ENCODE measurements at regions of chr4 and their contacts with region 1.

Region 1: DNA sequence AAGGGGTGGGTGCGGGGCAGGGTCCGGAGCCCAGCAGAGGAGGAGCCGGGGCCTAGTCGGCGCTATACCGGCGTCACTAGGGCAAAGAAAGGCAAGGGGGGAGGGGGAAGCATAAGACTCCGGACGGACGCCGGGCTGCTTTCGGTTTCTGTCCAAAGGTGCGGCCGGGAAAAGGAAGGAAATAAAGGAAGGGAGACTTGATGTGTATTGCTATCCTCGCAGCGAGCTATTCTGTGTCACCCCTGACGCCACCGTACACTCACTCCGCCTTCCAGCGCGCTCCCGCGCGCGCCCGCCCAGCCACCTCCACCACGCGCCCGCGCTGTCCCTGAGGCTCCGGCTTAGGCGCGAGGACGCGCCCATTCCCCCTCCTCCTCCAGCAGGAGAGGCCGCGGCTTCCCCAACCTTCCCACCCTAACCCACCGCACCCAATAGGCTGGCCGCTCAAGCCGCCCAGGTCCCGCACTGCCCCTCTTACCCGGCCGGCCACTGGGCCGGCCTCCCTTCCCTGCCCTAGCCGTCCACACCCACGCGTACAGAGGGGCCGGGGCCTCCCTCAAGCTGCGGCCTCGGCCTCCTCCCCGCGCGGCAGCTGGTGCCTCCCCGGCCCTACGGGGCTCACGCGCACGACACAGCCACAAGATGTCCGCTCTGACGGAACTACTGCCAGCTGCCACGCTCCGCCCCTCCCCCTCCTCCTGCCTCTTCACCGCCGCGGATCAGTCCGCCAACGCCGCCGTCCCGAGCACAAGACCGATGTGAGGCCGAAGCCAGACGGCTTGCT is at the start of gene UBE2D3:
- DNase-seq: peak; percentile 92
- H3K4me3 ChIP-seq: peak within 1 kb of the TSS; percentile 82 to 97 (median 89)
- H3K27ac ChIP-seq: peak within 1 kb of the TSS; percentile 98
- H3K4me1 ChIP-seq: peaks cover 32% of the 10 kb centered on the region
- H3K27me3 ChIP-seq: no peaks in the 10 kb centered on the region
- CTCF ChIP-seq: peak in 1 of 2 donors; percentile 15
- POLR2A ChIP-seq: peak; percentile 86
- total RNA-seq, gene UBE2D3: 279 and 288 TPM in 2 replicates

Region 2: DNA sequence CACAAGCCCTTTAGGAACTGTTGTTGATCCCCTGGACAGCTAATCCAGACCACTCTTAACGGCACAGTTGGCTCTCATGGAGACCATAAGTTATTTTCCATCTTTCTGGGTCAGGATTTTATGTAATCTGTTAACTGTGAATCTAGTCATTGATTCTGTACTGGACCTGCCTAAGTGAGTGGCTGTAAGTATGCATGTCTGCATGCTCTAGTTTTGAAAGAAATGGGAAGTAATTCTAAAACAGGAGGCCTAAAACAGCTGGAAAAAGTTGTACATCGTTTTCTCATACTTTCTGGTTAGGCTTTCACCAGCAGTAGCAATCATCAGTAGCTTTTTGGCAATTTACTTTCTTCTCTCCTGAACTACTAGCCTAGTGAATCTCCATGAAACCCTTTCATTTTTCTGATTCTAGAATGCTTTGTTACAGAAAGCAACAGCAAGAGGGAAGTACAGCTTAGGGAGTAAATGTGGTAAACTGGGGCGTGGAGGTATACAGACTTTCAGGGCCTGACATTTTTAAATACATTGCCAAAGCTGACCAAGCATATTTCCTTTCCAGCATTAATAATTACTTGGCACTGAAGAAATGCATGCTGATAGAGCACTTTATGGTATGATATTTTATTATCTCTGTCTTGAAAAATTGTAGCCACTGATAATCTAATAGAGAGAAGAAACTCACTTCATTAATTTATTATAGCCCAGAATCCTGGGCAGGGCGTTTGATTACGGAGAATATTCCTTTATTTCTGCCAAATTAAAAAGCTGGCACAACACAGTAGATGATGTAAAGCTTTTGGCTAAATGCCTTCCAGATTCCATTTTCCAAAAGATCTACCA is 833.9 kb before region 1 on chr4:
- CTCF ChIA-PET with region 1: no interaction called
- POLR2A ChIA-PET with region 1: no interaction called
- dilution Hi-C with region 1: no loop called
- intact Hi-C with region 1: no loop called
- DNase-seq: no peak
- H3K4me3 ChIP-seq: no peak overlapping the region
- H3K27ac ChIP-seq: no peak overlapping the region
- H3K4me1 ChIP-seq: no peaks in the 10 kb centered on the region
- H3K27me3 ChIP-seq: no peaks in the 10 kb centered on the region
- CTCF ChIP-seq: no peak
- POLR2A ChIP-seq: no peak

Region 3: DNA sequence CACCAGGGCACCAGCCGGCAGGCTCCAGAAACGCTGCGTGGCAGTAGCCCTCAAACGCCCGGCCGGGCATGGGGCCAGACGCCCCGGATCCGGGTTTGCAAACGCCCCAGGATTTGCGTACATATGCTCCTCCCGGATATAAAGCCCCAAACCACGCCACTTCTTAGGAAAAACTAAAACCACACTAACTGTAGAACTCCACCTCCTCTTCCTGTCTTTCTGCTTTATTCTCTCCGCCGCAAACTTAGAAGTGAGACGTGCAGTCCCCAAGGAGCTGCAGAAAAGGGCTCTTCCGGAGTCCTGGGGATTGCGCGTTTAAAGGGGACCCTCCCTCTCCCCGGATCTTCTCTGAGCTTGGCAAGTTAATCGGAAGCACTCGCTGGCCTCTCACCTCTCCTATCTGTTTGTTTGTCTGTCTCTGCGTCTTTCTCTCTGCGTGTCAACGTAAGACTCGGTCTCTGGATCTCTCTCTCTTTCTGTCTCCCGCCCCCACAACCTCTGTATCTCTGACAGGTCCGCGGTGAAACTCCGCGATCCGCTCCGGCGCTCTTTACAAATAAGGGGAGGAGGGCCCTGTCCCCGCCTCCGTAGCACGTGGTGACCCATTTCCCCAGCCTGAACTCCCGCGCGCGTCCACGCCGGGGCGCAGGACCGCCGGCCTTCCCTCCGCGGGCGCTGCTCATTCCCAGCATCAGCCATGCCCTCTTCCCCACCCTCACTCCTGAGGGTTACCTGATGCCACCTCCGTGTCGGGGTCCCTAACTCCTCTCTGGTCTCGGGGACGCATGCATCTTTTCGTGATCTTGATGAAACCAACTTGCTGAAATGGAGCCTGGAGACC is 481.9 kb before region 1 on chr4 and contains the start of gene SLC39A8:
- CTCF ChIA-PET with region 1: no interaction called
- POLR2A ChIA-PET with region 1: no interaction called
- dilution Hi-C with region 1: no loop called
- intact Hi-C with region 1: loop called (anchors 1 kb)
- DNase-seq: peak; percentile 79
- H3K4me3 ChIP-seq: peak within 1 kb of the TSS; percentile 39 to 90 (median 89)
- H3K27ac ChIP-seq: no peak within 1 kb of the TSS
- H3K4me1 ChIP-seq: peaks cover 19% of the 10 kb centered on the region
- H3K27me3 ChIP-seq: peaks cover 2 to 5% of the 10 kb centered on the region in 2 experiments
- CTCF ChIP-seq: peak; percentile 67 to 84
- POLR2A ChIP-seq: peak; percentile 42
- total RNA-seq, gene SLC39A8: 6.0 and 6.7 TPM in 2 replicates

Region 4: GRCh38 chr4:102620697-102621497 is 206.2 kb before region 1 on chr4:
- CTCF ChIA-PET with region 1: interaction called, 15 read pairs
- POLR2A ChIA-PET with region 1: interaction called, 3 read pairs
- dilution Hi-C with region 1: no loop called
- intact Hi-C with region 1: loop called (anchors 2 kb)
- DNase-seq: peak; percentile 67
- H3K4me3 ChIP-seq: no peak overlapping the region
- H3K27ac ChIP-seq: no peak overlapping the region
- H3K4me1 ChIP-seq: peaks cover 1% of the 10 kb centered on the region
- H3K27me3 ChIP-seq: no peaks in the 10 kb centered on the region
- CTCF ChIP-seq: peak; percentile 34 to 36
- POLR2A ChIP-seq: no peak

Region 5: DNA sequence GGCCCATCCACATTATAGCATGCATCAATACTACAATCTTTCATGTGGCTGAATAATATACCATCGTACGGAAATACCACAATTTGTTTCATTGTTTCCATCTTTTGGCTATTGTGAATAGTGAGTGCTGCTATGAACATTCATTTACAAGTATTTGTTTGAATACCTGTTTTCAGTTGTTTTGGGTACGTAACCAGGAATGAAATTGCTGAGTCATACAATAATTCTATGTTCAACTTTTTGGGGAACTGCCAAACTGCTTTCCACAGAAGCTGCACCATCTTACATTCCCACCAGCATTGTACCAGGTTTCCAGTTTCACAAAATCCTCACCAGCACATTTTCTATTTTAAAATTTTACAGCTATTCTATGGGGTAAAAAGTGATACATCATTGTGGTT is 37.8 kb before region 1 on chr4:
- CTCF ChIA-PET with region 1: no interaction called
- POLR2A ChIA-PET with region 1: no interaction called
- dilution Hi-C with region 1: no loop called
- intact Hi-C with region 1: loop called (anchors 2 kb)
- DNase-seq: peak; percentile 21
- H3K4me3 ChIP-seq: no peak overlapping the region
- H3K27ac ChIP-seq: no peak overlapping the region
- H3K4me1 ChIP-seq: no peaks in the 10 kb centered on the region
- H3K27me3 ChIP-seq: no peaks in the 10 kb centered on the region
- CTCF ChIP-seq: no peak
- POLR2A ChIP-seq: no peak

Region 6: GRCh38 chr4:102843273-102843672 is 16.2 kb after region 1 on chr4:
- CTCF ChIA-PET with region 1: interaction called, 12 read pairs
- POLR2A ChIA-PET with region 1: interaction called, 4 read pairs
- dilution Hi-C with region 1: no loop called
- intact Hi-C with region 1: no loop called
- DNase-seq: no peak
- H3K4me3 ChIP-seq: no peak overlapping the region
- H3K27ac ChIP-seq: no peak overlapping the region
- H3K4me1 ChIP-seq: no peaks in the 10 kb centered on the region
- H3K27me3 ChIP-seq: no peaks in the 10 kb centered on the region
- CTCF ChIP-seq: no peak
- POLR2A ChIP-seq: no peak

Region 7: DNA sequence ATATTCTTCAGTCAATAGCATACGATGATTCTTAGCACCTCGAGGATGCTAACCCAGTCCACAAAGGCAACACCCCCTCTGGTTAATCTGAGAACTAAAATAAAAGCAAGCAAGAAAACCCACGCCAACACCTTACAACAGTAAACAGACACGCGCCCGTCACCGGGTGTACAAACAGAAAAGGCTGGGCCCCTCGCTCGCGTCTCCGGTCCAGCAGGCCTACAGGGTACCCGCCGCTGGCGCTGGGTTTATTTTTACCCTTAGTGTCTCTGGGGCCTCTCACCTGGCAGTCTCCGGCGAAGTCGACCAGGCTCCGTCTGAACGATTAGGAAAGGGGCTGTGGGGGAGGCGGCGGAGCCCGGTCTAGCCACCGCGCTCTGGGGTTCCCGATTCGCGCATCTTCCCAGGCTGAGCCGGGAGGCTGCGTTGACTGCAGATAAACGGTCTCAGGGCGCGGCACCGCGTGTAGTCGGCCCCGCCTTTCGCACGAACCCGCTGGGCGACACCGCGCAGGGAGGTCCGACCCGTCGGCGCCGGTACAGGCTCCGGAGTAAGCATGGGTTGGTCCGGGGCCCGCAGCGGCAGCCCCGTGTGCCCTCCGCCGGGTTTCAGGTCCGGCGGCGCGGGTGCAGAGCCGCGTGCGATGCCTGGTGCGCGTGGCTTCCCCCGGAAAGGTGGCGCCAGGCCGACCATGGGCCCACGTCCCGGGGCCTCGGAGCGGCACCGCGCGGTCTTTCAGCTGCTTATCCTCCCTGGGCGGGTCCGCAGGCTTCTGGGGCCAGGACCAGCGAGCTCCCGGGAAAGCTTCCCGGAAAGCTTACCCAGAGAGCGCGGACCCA is 249.0 kb after region 1 on chr4:
- CTCF ChIA-PET with region 1: no interaction called
- POLR2A ChIA-PET with region 1: no interaction called
- dilution Hi-C with region 1: no loop called
- intact Hi-C with region 1: loop called (anchors 1 kb)
- DNase-seq: peak; percentile 69
- H3K4me3 ChIP-seq: peak overlapping the region; percentile 76 to 83 (median 79)
- H3K27ac ChIP-seq: peak overlapping the region; percentile 92
- H3K4me1 ChIP-seq: peaks cover 15% of the 10 kb centered on the region
- H3K27me3 ChIP-seq: no peaks in the 10 kb centered on the region
- CTCF ChIP-seq: no peak
- POLR2A ChIP-seq: peak; percentile 70